Dorsolateral prefrontal cortex (tissue), 120 donors: ENCODE measurements at regions of chr2 and their contacts with region 1.

Region 1: DNA sequence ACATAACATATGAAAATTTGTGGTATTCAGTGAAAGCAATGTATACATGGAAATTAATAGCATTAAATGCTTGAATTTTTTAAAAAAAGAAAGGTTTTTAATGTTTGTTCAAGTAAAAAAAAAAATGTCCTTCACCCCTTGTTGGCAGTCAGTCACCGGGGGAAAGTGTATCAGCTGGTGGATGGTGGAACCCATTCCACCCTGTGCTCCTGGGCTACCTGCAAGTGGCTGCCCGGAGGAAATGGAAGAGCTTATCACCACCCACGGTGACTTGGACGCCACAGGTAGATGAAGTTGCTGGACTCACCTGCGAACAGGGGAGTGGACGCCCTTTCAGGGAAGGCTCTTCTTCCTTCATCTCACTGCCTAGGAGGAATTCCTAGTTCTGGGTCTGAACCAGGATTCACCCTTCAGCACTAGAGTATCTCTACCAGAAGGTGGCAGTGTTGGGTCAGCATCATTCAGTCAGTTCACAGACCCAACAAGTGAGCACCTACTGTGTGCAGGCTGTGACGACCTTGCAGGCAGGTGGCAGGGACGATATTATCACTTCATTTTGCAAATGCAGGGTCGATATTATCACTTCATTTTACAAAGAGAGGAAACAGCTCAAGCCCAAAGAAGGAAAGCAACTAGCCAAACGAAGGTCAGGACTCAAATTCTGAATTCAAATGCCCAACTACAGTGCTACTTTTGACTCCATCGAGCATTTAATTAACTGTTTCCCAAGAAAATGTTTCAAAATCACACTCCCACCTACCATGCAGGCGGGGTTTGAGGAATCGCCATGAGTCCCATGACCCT is 35.8 kb downstream of the CIB4 start:
- DNase-seq: peak in 3 of 10 donors; percentile 29 to 52 (median 34)
- H3K4me3 ChIP-seq: no peak overlapping the region
- H3K27ac ChIP-seq: no peak overlapping the region
- H3K27me3 ChIP-seq: peaks cover 0 to 13% (median 0%) of the 10 kb centered on the region in 45 donors
- CTCF ChIP-seq: peak; percentile 51 to 93 (median 80)

Region 2: GRCh38 chr2:26745609-26746327 is 140.4 kb after region 1 on chr2:
- intact Hi-C with region 1: loop called (anchors 2 kb)
- DNase-seq: peak; percentile 84 to 92 (median 86)
- H3K4me3 ChIP-seq: no peak overlapping the region
- H3K27ac ChIP-seq: no peak overlapping the region
- H3K27me3 ChIP-seq: no peaks in the 10 kb centered on the region
- CTCF ChIP-seq: peak; percentile 85 to 99 (median 95)